IMR-90 (cell line): ENCODE measurements at regions of chr11 and their contacts with region 1.

Region 1: GRCh38 chr11:46389450-46390253 is 1.9 kb downstream of the CHRM4 start:
- DNase-seq: peak; percentile 46
- ATAC-seq: peak; percentile 69
- H3K4me3 ChIP-seq: peak overlapping the region; percentile 45
- H3K27ac ChIP-seq: no peak overlapping the region
- H3K4me1 ChIP-seq: peaks cover 8% of the 10 kb centered on the region; the same call in 1 of the 2 replicates
- H3K27me3 ChIP-seq: peaks cover 33% of the 10 kb centered on the region
- CTCF ChIP-seq: peak; percentile 91
- POLR2A ChIP-seq: no peak
- RAD21 ChIP-seq: peak; percentile 82

Region 2: GRCh38 chr11:45724145-45724544 is 665.5 kb before region 1 on chr11:
- CTCF ChIA-PET with region 1: no interaction called
- POLR2A ChIA-PET with region 1: no interaction called
- dilution Hi-C with region 1: no loop called
- in situ Hi-C with region 1: no loop called
- intact Hi-C with region 1: no loop called
- DNase-seq: no peak
- ATAC-seq: no peak
- H3K4me3 ChIP-seq: no peak overlapping the region
- H3K27ac ChIP-seq: no peak overlapping the region
- H3K4me1 ChIP-seq: no peaks in the 10 kb centered on the region
- H3K27me3 ChIP-seq: peaks cover 10% of the 10 kb centered on the region
- CTCF ChIP-seq: no peak
- POLR2A ChIP-seq: no peak
- RAD21 ChIP-seq: no peak

Region 3: DNA sequence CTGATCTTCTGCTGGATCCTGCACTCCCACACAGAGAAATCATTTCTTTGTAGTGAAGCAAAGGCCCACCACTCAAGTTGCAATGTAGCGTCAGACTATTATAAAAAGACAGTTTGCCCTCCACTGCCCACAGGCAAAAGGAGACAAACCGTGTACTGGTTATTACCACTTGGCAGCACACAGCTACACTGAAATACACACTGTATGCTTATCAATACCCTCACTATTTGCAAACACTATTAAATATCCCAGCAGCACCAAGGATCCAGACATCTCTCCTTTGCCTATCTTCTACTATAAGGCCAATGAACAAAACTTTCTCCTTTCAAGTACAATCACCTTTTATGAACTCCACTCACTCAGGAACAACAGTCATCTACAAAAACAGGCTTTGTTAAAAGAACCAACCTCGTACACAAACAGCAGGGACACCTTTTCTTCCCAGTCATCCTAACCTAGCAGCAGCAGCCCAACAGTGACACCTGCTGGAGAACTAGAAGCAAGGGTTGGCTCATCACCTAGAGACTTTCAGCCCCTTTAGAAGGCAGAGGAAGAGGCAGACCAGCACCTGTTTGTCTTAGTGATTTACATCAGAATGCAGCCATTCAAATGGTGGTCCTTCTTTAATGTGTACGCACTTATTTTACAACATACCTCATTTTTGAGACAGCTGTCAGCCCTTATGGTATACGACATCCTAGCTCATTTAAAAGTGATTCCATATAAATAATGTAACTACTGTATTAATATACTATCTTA is 148.1 kb after region 1 on chr11:
- CTCF ChIA-PET with region 1: interaction called, 6 read pairs
- POLR2A ChIA-PET with region 1: no interaction called
- dilution Hi-C with region 1: no loop called
- in situ Hi-C with region 1: no loop called
- intact Hi-C with region 1: loop called (anchors 1 kb)
- DNase-seq: peak; percentile 78
- ATAC-seq: peak; percentile 88
- H3K4me3 ChIP-seq: no peak overlapping the region
- H3K27ac ChIP-seq: no peak overlapping the region
- H3K4me1 ChIP-seq: no peaks in the 10 kb centered on the region
- H3K27me3 ChIP-seq: no peaks in the 10 kb centered on the region
- CTCF ChIP-seq: peak; percentile 92
- POLR2A ChIP-seq: no peak
- RAD21 ChIP-seq: peak; percentile 94

Region 4: DNA sequence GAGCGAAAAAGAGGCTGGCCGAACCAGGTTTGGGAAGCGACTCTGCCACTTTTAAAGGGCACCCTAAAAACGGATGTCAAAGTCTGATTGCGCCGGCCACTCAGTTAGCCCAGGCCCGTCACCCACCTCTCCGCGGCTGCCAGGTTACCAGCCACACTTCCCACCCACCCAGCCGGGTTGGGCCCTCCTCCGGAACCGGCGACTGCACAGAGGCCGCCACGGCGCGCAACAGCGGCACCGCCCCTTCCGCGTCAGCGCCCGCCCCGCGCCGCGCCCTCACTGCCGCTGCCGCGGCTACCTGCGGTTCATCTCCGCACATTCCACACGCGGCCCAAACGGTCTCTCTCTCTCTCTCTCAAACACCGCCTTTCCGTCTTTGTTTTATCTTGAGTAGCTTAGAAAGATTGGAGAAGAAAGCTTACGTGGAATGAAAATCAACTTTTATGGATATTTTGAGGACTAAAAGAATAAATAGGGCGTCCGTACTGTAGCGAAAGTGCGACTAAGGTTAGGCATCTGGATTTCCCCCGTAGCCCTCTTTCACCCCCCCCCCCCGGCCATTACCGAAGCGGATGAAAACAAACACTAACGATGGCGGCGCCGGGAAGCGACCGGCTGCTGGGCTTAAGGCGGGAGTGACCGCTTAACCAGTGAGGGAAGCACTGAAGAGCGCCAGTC is 227.5 kb after region 1 on chr11 and contains the starts of genes ATG13 and HARBI1:
- CTCF ChIA-PET with region 1: interaction called, 3 read pairs
- POLR2A ChIA-PET with region 1: no interaction called
- dilution Hi-C with region 1: no loop called
- in situ Hi-C with region 1: no loop called
- intact Hi-C with region 1: loop called (anchors 1 kb)
- DNase-seq: peak; percentile 85
- ATAC-seq: peak; percentile 99
- H3K4me3 ChIP-seq: peak within 1 kb of the TSS; percentile 90
- H3K27ac ChIP-seq: peak within 1 kb of the TSS; percentile 82
- H3K4me1 ChIP-seq: peaks cover 5% of the 10 kb centered on the region; the same call in 1 of the 2 replicates
- H3K27me3 ChIP-seq: no peaks in the 10 kb centered on the region
- CTCF ChIP-seq: no peak
- POLR2A ChIP-seq: peak; percentile 77
- RAD21 ChIP-seq: no peak
- total RNA-seq, gene ATG13: 32.2 and 43.0 TPM in 2 replicates
- total RNA-seq, gene HARBI1: 5.2 and 6.1 TPM in 2 replicates

Region 5: DNA sequence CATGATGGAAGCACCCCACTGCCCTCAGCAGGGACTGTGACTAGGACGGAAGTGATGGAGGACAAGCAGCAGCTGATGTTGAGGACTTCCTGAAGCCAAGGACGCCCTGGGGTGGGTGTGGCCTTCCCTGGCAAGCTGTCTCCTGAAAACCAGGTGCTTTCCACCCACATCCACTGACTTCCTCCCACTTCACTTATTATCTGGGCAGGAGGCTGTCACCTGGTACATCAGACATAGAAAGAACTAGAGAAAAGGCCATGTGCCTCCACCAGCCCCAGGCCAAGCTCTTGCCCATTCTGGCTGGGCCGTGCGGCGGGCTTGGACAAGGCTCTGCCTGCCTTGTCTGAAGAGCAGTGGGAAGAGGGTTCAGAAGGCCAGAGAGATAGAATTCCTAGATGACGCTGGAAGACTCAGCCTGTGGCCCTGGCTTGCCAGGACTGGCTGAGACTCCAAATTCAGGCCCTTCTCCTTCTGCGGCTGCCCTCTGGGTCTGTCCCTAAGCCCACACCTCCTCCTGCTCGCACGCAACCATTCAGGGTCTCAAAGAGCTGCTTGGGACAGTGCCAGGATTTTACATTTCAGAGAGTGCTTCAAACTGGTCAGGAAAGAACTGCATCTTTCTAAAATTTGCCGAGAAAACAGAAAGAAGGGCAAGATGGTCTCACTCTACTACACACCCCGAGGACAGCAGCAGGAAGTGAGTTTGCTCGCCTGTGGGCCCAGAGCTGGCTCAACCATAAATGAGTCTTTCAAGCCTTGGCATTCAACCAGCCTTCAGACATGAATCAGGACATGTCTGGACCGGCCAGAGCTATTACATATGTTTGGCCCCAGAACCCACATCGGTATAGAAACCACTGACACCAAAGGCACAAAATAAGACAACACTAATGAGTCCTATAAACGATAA is 297.5 kb after region 1 on chr11:
- CTCF ChIA-PET with region 1: no interaction called
- POLR2A ChIA-PET with region 1: no interaction called
- dilution Hi-C with region 1: no loop called
- in situ Hi-C with region 1: no loop called
- intact Hi-C with region 1: loop called (anchors 10 kb)
- DNase-seq: peak; percentile 91
- ATAC-seq: peak; percentile 85
- H3K4me3 ChIP-seq: no peak overlapping the region
- H3K27ac ChIP-seq: peak overlapping the region; percentile 94
- H3K4me1 ChIP-seq: peaks cover 18% of the 10 kb centered on the region
- H3K27me3 ChIP-seq: no peaks in the 10 kb centered on the region
- CTCF ChIP-seq: no peak
- POLR2A ChIP-seq: peak; percentile 47; the same call in 1 of the 2 replicates
- RAD21 ChIP-seq: no peak

Region 6: GRCh38 chr11:47879259-47880158 is 1489.9 kb after region 1 on chr11:
- CTCF ChIA-PET with region 1: no interaction called
- POLR2A ChIA-PET with region 1: no interaction called
- dilution Hi-C with region 1: no loop called
- in situ Hi-C with region 1: no loop called
- intact Hi-C with region 1: no loop called
- DNase-seq: no peak
- ATAC-seq: no peak
- H3K4me3 ChIP-seq: no peak overlapping the region
- H3K27ac ChIP-seq: no peak overlapping the region
- H3K4me1 ChIP-seq: no peaks in the 10 kb centered on the region
- H3K27me3 ChIP-seq: no peaks in the 10 kb centered on the region
- CTCF ChIP-seq: no peak
- POLR2A ChIP-seq: no peak
- RAD21 ChIP-seq: no peak